Activated CD8-positive, alpha-beta T cell treated with anti-CD3 and anti-CD28 coated beads, Interleukin-2, amount 10 ng/mL, durations not matched to agents 7 days and 5 days (primary cell): ENCODE measurements at regions of chr10 and their contacts with region 1.

Region 1: GRCh38 chr10:27742195-27743011 is 3.2 kb downstream of the MKX start:
- DNase-seq: peak; percentile 84
- ATAC-seq: peak; percentile 87
- H3K4me3 Mint-ChIP-seq: peak overlapping the region; percentile 59
- H3K27ac Mint-ChIP-seq: peak overlapping the region; percentile 46
- H3K4me1 Mint-ChIP-seq: peaks cover 43% of the 10 kb centered on the region
- H3K27me3 Mint-ChIP-seq: peaks cover 60% of the 10 kb centered on the region

Region 2: DNA sequence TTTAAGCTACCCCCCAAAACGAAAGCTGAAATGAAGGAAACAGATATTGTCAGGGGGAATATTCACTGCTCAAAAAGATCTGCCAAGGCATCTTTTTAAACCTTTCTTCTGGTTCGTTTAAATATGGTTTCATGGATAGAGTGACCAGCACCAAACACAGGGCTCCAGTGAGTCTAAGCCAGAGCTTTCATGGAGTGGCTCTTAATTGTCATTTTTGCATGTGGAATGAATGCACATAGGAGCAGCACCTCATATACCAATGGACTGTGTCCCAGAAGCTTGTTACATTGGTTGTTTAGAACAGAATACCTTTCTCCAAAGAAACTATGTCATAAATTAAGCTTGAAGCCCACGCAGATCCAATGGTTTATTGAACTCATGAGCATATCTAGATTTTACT is 14.1 kb before region 1 on chr10:
- CTCF ChIA-PET with region 1: interaction called, 10 read pairs
- POLR2A ChIA-PET with region 1: no interaction called
- DNase-seq: no peak
- ATAC-seq: no peak
- H3K4me3 Mint-ChIP-seq: no peak overlapping the region
- H3K27ac Mint-ChIP-seq: no peak overlapping the region
- H3K4me1 Mint-ChIP-seq: no peaks in the 10 kb centered on the region
- H3K27me3 Mint-ChIP-seq: peaks cover 22% of the 10 kb centered on the region

Region 3: GRCh38 chr10:28179006-28179742 is 436.8 kb after region 1 on chr10:
- CTCF ChIA-PET with region 1: interaction called, 22 read pairs
- POLR2A ChIA-PET with region 1: interaction called, 4 read pairs
- DNase-seq: peak; percentile 68
- ATAC-seq: peak; percentile 50
- H3K4me3 Mint-ChIP-seq: peak overlapping the region; percentile 87
- H3K27ac Mint-ChIP-seq: peak overlapping the region; percentile 96
- H3K4me1 Mint-ChIP-seq: peaks cover 18% of the 10 kb centered on the region
- H3K27me3 Mint-ChIP-seq: no peaks in the 10 kb centered on the region